ENCODE measurements at regions of chr19 and their contacts with region 1.

Region 1: GRCh38 chr19:53912653-53913052 is 3.6 kb downstream of the CACNG7 start:
- DNase-seq: peak; percentile 88
- ATAC-seq: peak; percentile 49
- H3K4me3 Mint-ChIP-seq: no peak overlapping the region
- H3K27ac Mint-ChIP-seq: no peak overlapping the region; the same call in 1 of the 2 replicates
- H3K4me1 Mint-ChIP-seq: peaks cover 17% of the 10 kb centered on the region
- H3K27me3 Mint-ChIP-seq: peaks cover 34% of the 10 kb centered on the region
- CTCF ChIP-seq: peak; percentile 92

Region 2: GRCh38 chr19:52904052-52904451 is 1008.6 kb before region 1 on chr19:
- CTCF ChIA-PET with region 1: no interaction called
- POLR2A ChIA-PET with region 1: no interaction called
- DNase-seq: no peak
- ATAC-seq: no peak
- H3K4me3 Mint-ChIP-seq: no peak overlapping the region
- H3K27ac Mint-ChIP-seq: no peak overlapping the region
- H3K4me1 Mint-ChIP-seq: peaks cover 18% of the 10 kb centered on the region; the same call in 1 of the 2 replicates
- H3K27me3 Mint-ChIP-seq: no peaks in the 10 kb centered on the region
- CTCF ChIP-seq: no peak

Region 3: GRCh38 chr19:53867225-53868090 is 45.2 kb before region 1 on chr19 and contains the start of gene MYADM:
- CTCF ChIA-PET with region 1: interaction called, 16 read pairs
- POLR2A ChIA-PET with region 1: interaction called, 8 read pairs
- DNase-seq: peak; percentile 100
- ATAC-seq: peak; percentile 71
- H3K4me3 Mint-ChIP-seq: peak within 1 kb of the TSS; percentile 93
- H3K27ac Mint-ChIP-seq: peak within 1 kb of the TSS; percentile 99
- H3K4me1 Mint-ChIP-seq: peaks cover 19% of the 10 kb centered on the region
- H3K27me3 Mint-ChIP-seq: peaks cover 5% of the 10 kb centered on the region
- CTCF ChIP-seq: no peak
- total RNA-seq, gene MYADM: 78.6 to 86.4 TPM (median 79.7 TPM) in 3 replicates

Region 4: DNA sequence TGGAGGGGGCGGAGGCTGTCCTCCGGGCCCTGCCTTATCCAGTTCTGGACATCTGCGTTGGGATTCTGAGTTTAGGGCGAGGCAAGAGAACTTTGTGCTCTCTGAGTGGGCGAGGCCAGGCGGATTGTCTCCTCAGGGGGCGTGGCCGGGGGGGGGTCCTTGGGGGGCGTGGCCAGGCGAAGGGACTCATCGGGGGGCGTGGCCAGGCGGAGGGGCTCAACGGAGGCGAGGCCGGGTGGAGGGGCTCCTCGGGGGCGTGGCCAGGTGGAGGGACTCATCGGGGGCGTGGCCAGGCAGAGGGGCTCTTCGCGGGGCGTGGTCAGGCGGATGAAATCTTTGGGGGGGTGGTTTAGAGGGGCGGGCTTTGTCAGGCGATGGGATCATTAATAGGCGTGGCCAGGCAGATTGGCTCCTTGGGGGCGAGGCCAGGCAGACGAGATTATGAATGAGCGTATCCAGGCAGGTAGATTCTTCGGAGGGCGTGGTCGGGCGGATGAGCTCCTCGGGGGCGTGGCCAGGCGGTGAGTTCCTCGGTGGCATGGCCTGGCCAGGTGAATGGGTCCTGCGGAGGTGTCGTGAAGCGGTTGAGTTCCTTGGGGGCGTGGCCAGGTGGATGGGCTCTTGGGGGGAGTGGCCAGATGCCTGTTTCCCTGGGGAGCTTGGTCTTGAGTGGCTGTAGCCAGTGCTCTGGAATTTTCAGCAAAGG is 13.9 kb before region 1 on chr19:
- CTCF ChIA-PET with region 1: interaction called, 58 read pairs
- POLR2A ChIA-PET with region 1: no interaction called
- DNase-seq: peak; percentile 100
- ATAC-seq: peak; percentile 92
- H3K4me3 Mint-ChIP-seq: peak overlapping the region; percentile 81
- H3K27ac Mint-ChIP-seq: peak overlapping the region; percentile 100
- H3K4me1 Mint-ChIP-seq: peaks cover 33% of the 10 kb centered on the region
- H3K27me3 Mint-ChIP-seq: 0 out of 2 replicates have a peak, but pooled peaks cover 9% of the 10 kb centered on the region
- CTCF ChIP-seq: no peak

Region 5: DNA sequence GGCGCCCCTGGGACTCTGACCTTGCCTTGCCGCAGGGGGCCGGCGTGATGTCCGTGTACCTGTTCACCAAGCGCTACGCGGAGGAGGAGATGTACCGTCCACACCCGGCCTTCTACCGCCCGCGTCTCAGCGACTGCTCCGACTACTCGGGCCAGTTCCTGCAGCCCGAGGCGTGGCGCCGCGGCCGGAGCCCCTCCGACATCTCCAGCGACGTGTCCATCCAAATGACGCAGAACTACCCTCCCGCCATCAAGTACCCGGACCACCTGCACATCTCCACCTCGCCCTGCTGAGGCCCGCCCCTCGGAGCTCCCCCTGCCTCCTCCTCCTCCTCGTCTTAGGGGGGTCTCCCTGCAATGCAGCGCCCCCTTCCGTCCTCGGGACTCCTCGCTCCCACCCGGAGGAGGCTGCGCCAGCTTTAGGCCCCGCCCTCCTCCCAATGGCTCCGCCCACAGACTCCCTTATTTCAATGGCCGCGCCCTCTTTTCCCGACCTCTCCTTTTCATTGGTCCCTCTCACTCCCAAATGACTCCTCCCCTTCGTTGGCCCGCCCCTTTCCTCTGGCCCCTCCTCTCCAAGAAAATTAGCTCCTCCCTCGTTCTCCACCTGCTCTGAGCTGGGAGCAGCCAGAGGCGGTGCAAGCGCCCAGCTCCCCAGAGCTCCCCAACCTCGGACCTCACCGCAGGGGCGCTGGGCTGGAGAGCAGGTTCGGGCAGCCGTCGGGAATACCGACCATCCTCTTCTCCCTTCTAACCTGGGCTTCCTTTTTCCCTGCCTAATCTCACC is 29.5 kb after region 1 on chr19:
- CTCF ChIA-PET with region 1: interaction called, 102 read pairs
- POLR2A ChIA-PET with region 1: interaction called, 8 read pairs
- DNase-seq: peak; percentile 100
- ATAC-seq: peak; percentile 92
- H3K4me3 Mint-ChIP-seq: peak overlapping the region; percentile 95
- H3K27ac Mint-ChIP-seq: 0 out of 2 replicates have a peak overlapping the region, but pooled peaks have one; percentile 83
- H3K4me1 Mint-ChIP-seq: peaks cover 32% of the 10 kb centered on the region
- H3K27me3 Mint-ChIP-seq: no peaks in the 10 kb centered on the region; the same call in 1 of the 2 replicates
- CTCF ChIP-seq: peak; percentile 88

Region 6: GRCh38 chr19:53977429-53977990 is 64.9 kb after region 1 on chr19:
- CTCF ChIA-PET with region 1: interaction called, 26 read pairs
- POLR2A ChIA-PET with region 1: interaction called, 5 read pairs
- DNase-seq: peak; percentile 82
- ATAC-seq: 0 out of 2 replicates have a peak, but pooled peaks have one; percentile 1
- H3K4me3 Mint-ChIP-seq: peak overlapping the region; percentile 93
- H3K27ac Mint-ChIP-seq: peak overlapping the region; percentile 94
- H3K4me1 Mint-ChIP-seq: peaks cover 15% of the 10 kb centered on the region
- H3K27me3 Mint-ChIP-seq: peaks cover 4% of the 10 kb centered on the region; the same call in 1 of the 2 replicates
- CTCF ChIP-seq: no peak

Region 7: GRCh38 chr19:54035215-54036178 is 122.8 kb after region 1 on chr19:
- CTCF ChIA-PET with region 1: interaction called, 35 read pairs
- POLR2A ChIA-PET with region 1: no interaction called
- DNase-seq: no peak
- ATAC-seq: peak; percentile 71
- H3K4me3 Mint-ChIP-seq: peak overlapping the region; percentile 24
- H3K27ac Mint-ChIP-seq: peak overlapping the region; percentile 99
- H3K4me1 Mint-ChIP-seq: peaks cover 53% of the 10 kb centered on the region
- H3K27me3 Mint-ChIP-seq: no peaks in the 10 kb centered on the region
- CTCF ChIP-seq: no peak